Gastrocnemius medialis (tissue), 4 donors: ENCODE measurements at regions of chr11 and their contacts with region 1.

Region 1: GRCh38 chr11:120229451-120230424 is 10.2 kb upstream of the POU2F3 start:
- DNase-seq: no peak
- ATAC-seq: no peak
- H3K4me3 ChIP-seq: no peak overlapping the region
- H3K27ac ChIP-seq: peak overlapping the region in 2 of 4 donors; percentile 6 to 12
- H3K4me1 ChIP-seq: peaks cover 9% of the 10 kb centered on the region in 2 donors
- H3K27me3 ChIP-seq: peaks cover 0 to 6% (median 0%) of the 10 kb centered on the region in 3 donors
- CTCF ChIP-seq: peak; percentile 48 to 70 (median 66)
- POLR2A ChIP-seq: no peak

Region 2: GRCh38 chr11:120172054-120172911 is 57.5 kb before region 1 on chr11:
- in situ Hi-C with region 1: loop called (anchors 5 kb)
- intact Hi-C with region 1: loop called (anchors 1 kb)
- DNase-seq: peak; percentile 38 to 46
- ATAC-seq: peak; percentile 28 to 70
- H3K4me3 ChIP-seq: no peak overlapping the region
- H3K27ac ChIP-seq: no peak overlapping the region
- H3K4me1 ChIP-seq: peaks cover 0 to 4% of the 10 kb centered on the region in 2 donors
- H3K27me3 ChIP-seq: peaks cover 25 to 28% (median 27%) of the 10 kb centered on the region in 3 donors
- CTCF ChIP-seq: peak; percentile 66 to 80 (median 77)
- POLR2A ChIP-seq: no peak

Region 3: DNA sequence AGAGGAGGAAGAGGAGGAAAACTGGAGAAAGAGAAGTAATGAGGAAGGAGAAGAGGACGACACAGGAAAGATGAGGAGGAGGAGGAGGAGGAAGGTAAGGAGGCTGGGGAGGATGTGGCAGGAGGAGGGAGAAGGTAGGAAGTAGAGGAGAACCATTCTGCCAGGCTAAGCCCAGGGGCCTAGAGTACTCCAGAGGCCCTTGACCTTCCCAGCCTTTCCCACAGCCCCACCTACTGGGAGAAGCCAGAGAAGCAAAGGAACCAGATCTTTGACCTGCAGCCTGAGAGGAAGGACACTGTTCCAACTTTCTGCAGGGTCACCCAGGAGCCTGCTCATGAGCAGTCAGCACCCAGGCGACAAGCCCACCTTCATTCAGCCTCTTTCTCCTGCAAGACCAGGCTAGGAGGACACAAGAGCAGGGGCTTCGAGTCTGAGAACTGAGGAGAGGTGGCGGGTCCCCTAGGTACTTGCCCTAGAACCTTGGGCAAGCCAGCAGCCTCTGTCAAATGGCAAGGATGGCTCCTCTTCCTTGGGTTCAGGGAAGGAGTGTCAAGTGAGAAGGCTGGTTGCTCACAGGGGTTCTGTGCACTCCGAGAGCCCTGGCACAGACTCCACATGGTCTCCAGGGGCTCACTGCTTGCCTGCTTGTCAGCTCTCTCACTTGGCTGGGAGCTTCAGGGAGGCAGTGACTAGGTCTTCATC is 46.8 kb before region 1 on chr11:
- in situ Hi-C with region 1: no loop called
- intact Hi-C with region 1: no loop called
- DNase-seq: no peak
- ATAC-seq: no peak
- H3K4me3 ChIP-seq: no peak overlapping the region
- H3K27ac ChIP-seq: peak overlapping the region; percentile 55 to 78 (median 75)
- H3K4me1 ChIP-seq: peaks cover 10 to 19% of the 10 kb centered on the region in 2 donors
- H3K27me3 ChIP-seq: no peaks in the 10 kb centered on the region
- CTCF ChIP-seq: peak in 1 of 5 experiments; percentile 26
- POLR2A ChIP-seq: no peak

Region 4: GRCh38 chr11:120210626-120211521 is 18.9 kb before region 1 on chr11 and contains the start of gene OAF:
- in situ Hi-C with region 1: no loop called
- intact Hi-C with region 1: loop called (anchors 2 kb)
- DNase-seq: peak; percentile 42 to 61
- ATAC-seq: peak; percentile 75 to 79
- H3K4me3 ChIP-seq: peak within 1 kb of the TSS; percentile 58 to 88 (median 66)
- H3K27ac ChIP-seq: peak within 1 kb of the TSS; percentile 56 to 79 (median 76)
- H3K4me1 ChIP-seq: peaks cover 17 to 26% of the 10 kb centered on the region in 2 donors
- H3K27me3 ChIP-seq: no peaks in the 10 kb centered on the region
- CTCF ChIP-seq: peak in 4 of 5 experiments; percentile 19 to 43 (median 28)
- POLR2A ChIP-seq: peak; percentile 28 to 60
- total RNA-seq, gene OAF: 8.7 to 17.5 (median 10.1) TPM

Region 5: DNA sequence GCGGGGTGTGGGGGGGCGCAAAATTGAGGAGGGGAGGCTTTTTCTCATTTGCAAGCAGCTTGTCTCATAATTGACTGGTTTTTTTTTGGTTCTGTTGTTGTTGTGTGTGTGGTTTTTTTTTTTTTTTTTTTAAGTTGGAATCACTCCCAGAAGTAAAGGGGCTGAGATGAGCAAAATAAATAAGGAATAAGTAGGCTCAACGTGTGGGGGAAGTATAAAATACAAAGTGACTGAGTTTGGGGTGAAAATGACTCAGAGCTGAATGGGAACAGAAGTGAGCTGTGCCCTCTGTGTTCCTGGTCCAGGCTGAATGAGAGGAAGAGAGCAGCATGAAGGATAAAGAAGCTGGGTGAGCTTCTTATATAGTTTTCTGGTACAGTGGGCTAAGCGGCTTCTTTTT is 371.8 kb after region 1 on chr11:
- in situ Hi-C with region 1: no loop called
- intact Hi-C with region 1: no loop called
- DNase-seq: no peak
- ATAC-seq: no peak
- H3K4me3 ChIP-seq: no peak overlapping the region
- H3K27ac ChIP-seq: no peak overlapping the region
- H3K4me1 ChIP-seq: no peaks in the 10 kb centered on the region
- H3K27me3 ChIP-seq: no peaks in the 10 kb centered on the region
- CTCF ChIP-seq: no peak
- POLR2A ChIP-seq: no peak